ENCODE measurements at regions of chr3 and their contacts with region 1.

Region 1: DNA sequence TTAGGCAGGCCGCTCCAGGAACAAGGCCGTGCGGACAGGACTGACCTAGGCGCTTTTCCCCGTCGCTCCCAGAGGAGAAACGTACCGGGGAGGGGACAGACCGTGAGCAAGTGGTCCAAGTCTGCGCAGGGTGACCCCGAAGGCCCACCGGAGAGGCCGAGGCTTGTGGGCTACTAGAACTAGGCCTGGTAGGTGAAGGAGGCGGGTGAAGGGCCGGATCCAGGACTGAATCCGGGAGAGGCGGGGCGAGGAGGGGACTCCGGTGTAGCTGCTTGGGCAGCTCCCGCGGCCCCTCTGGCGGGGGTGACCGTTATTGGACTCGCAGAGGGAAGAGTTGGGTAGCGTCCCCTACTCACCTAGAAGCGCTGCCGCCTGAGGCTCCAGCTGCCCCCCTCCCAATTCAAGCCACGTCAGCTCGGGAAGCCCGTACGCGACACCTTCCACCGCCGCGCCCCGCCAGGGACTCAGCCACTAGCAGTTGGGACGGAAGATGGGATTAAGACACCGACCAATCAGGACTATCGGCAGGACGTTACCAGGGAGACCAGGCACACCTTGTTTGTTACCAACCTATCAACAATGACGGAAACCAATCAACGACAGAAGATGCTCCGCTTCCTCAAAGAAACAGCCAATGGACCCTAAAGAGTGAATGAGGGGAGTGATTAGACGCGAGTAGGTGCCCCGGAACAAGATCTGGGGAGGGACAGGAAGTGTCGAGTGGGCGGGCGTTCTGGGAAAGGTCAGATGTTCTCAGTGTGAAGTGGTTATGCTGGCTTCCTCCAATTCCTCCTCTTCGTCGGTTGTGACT is at the start of gene GOLGB1:
- DNase-seq: peak; percentile 100
- ATAC-seq: peak; percentile 94
- H3K4me3 ChIP-seq: peak within 1 kb of the TSS; percentile 86
- H3K27ac ChIP-seq: peak within 1 kb of the TSS; percentile 57
- H3K4me1 ChIP-seq: peaks cover 19% of the 10 kb centered on the region
- H3K27me3 ChIP-seq: no peaks in the 10 kb centered on the region
- CTCF ChIP-seq: no peak
- total RNA-seq, gene GOLGB1: 30.2 and 31.6 TPM in 2 replicates

Region 2: GRCh38 chr3:121707531-121708273 is 41.8 kb before region 1 on chr3:
- CTCF ChIA-PET with region 1: no interaction called
- POLR2A ChIA-PET with region 1: no interaction called
- intact Hi-C with region 1: loop called (anchors 2 kb)
- DNase-seq: peak; percentile 92
- ATAC-seq: peak; percentile 85
- H3K4me3 ChIP-seq: no peak overlapping the region
- H3K27ac ChIP-seq: peak overlapping the region; percentile 54
- H3K4me1 ChIP-seq: peaks cover 28% of the 10 kb centered on the region
- H3K27me3 ChIP-seq: no peaks in the 10 kb centered on the region
- CTCF ChIP-seq: no peak

Region 3: GRCh38 chr3:121834696-121835464 is 85.4 kb after region 1 on chr3 and contains the starts of genes EAF2 and IQCB1:
- CTCF ChIA-PET with region 1: no interaction called
- POLR2A ChIA-PET with region 1: no interaction called
- intact Hi-C with region 1: loop called (anchors 2 kb)
- DNase-seq: peak; percentile 99
- ATAC-seq: peak; percentile 99
- H3K4me3 ChIP-seq: peak within 1 kb of the TSS; percentile 81
- H3K27ac ChIP-seq: no peak within 1 kb of the TSS
- H3K4me1 ChIP-seq: peaks cover 16% of the 10 kb centered on the region
- H3K27me3 ChIP-seq: no peaks in the 10 kb centered on the region
- CTCF ChIP-seq: no peak
- total RNA-seq, gene EAF2: 2.8 and 8.6 TPM in 2 replicates
- total RNA-seq, gene IQCB1: 29.0 and 29.3 TPM in 2 replicates

Measured in PC-3 (cell line).